ENCODE measurements at regions of chr6 and their contacts with region 1.

Region 1: DNA sequence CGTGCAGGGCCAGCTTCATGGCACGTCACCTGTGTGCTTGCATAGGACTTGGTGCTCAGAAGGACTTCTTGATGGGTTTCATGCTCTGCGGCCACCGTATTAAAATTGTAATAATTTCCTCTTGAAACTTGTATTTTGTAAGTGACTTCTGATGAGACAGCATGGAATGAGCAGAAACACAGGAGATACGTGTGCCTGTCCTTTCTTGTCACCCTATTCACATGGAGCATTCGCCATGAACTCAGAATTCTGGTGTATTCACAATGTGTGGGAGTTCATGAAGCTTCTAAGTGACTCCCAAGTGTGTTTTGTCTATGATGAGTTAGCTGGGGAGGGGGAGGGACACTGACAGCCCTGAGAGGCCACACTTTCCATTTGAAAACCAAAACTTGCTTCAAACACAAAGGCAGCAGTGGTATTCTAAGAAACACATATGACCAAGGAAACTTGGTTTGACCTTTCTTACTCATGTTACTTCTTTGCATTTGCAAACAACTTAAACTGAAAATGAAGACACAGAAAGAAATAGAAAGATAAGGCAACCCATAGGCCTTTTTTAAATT is 92.1 kb upstream of the NEDD9 start:
- DNase-seq: peak; percentile 87
- H3K4me3 Mint-ChIP-seq: peak overlapping the region; percentile 78
- H3K27ac Mint-ChIP-seq: peak overlapping the region; percentile 97
- H3K4me1 Mint-ChIP-seq: peaks cover 75% of the 10 kb centered on the region
- H3K27me3 Mint-ChIP-seq: no peaks in the 10 kb centered on the region

Region 2: DNA sequence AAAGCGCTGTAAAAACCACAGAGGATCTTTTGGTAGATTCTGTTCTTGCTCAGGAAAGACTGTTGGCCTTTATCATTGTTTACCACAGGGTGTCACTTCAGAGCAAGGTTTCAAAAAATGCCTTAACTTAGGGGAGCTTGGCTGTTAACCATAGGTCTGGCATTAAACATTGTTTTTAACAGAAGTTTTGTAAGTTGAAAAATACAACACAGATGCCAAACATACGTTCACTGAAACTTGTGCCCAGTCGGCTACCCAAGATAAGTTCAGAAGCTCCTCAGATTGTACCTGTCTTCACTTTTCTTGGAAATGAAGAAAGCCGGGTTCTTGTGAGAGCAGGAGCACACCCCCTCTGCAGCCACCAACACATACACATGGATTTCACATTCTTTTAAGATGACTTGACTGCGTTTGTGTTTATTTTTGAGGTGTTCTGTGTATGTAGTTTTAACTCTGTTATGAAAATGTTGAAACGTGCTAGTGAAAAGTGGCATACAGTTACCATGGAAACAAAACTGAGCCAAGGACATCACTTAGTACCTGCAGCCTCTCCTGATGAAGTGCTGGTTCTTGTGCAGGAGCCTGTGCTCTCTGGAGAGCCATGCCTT is 372.8 kb before region 1 on chr6:
- intact Hi-C with region 1: no loop called
- DNase-seq: no peak
- H3K4me3 Mint-ChIP-seq: no peak overlapping the region
- H3K27ac Mint-ChIP-seq: no peak overlapping the region
- H3K4me1 Mint-ChIP-seq: no peaks in the 10 kb centered on the region
- H3K27me3 Mint-ChIP-seq: peaks cover 19% of the 10 kb centered on the region

Region 3: DNA sequence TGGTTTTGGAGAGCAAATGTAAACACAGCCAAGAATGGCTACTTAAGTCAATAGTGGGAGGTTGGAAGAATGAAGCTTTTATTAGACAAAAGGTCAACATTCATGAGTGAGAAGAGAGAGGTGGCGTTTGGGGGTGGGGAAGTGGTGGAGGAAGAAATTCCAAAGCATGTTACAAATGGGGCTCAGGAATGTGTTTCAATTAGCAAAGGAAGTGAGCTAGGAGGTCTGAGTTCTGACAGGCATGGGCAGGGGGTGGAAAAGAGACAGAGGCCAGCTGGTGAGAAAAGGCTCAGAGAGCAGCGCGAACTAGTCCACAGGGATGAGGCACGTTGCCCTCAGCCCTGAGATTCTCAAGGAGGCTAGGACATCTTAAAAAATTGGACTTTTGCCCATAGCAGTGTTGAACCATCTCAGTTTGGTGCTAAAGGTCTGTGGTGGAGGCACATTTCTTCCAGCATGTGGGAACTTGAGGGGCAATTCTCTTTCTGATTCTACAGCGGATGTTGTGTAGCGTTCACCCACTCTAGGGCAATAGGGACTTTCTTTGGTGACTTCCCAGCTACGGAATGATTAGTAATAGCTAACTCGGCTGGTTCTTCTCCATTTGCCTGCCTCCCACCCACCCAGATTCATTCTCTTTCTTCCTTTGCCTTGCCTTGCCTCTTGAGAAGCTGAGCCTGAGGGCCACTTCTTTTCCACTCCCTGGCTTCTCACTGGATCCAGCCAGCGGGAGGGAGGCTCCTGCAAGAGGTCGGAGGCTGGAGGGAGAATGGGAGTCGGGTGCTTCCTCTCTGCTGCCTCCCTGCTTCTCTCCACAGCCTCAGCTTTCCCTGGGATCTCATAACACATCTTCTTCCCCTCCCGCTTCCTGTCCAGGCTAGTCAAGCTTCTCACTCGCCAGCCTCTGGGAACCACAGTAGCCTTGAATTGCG is 47.0 kb before region 1 on chr6:
- intact Hi-C with region 1: loop called (anchors 2 kb)
- DNase-seq: no peak
- H3K4me3 Mint-ChIP-seq: peak overlapping the region; percentile 31
- H3K27ac Mint-ChIP-seq: peak overlapping the region; percentile 89
- H3K4me1 Mint-ChIP-seq: peaks cover 37% of the 10 kb centered on the region
- H3K27me3 Mint-ChIP-seq: no peaks in the 10 kb centered on the region

Region 4: GRCh38 chr6:11343963-11344747 is 19.6 kb after region 1 on chr6:
- intact Hi-C with region 1: loop called (anchors 1 kb)
- DNase-seq: no peak
- H3K4me3 Mint-ChIP-seq: peak overlapping the region; percentile 2
- H3K27ac Mint-ChIP-seq: peak overlapping the region; percentile 70
- H3K4me1 Mint-ChIP-seq: peaks cover 81% of the 10 kb centered on the region
- H3K27me3 Mint-ChIP-seq: no peaks in the 10 kb centered on the region

Region 5: GRCh38 chr6:11374036-11375010 is 49.8 kb after region 1 on chr6:
- intact Hi-C with region 1: loop called (anchors 1 kb)
- DNase-seq: peak; percentile 67
- H3K4me3 Mint-ChIP-seq: peak overlapping the region; percentile 58
- H3K27ac Mint-ChIP-seq: peak overlapping the region; percentile 80
- H3K4me1 Mint-ChIP-seq: peaks cover 56% of the 10 kb centered on the region
- H3K27me3 Mint-ChIP-seq: no peaks in the 10 kb centered on the region

Region 6: DNA sequence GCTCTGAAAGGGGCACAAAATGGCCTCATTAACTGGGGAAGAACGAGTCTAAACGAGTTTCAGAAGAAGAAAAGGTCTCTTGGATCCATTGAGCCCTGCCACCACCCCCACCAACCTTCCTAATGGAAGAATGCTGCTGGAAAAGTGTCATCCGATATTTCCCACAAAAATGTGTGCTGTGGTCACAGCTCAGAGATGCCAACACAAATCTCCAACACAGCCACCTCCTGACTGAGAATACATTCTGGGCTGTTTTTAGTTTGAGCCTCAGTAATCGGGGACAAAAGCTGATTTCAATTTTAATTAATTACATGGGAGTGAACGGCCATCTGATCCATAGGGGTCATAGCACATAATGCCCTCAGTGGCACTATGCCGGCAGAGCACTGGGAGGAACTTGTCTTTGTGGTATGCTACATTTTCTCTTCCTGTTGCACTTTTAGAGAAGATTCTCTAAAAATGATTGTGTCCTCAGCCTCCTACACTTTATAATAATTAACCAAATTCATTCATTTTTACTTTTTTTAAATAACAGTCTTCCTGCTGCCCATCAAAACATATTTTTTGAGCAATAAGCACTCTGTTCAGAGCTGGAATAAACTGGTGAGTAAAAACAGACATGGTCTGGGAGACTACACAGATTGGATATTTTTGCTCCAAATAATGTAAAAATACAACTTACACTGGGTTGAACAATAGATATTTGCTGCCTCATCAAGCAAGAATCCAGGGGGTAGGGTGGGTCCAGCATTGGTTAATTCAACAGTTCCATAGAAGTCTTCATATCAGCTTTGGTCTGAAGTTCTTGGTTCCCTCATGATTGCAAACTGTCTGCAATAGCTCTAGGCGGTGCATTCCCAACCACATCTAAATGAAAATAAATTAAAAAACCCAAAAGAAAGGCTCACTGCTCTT is 69.4 kb after region 1 on chr6:
- intact Hi-C with region 1: no loop called
- DNase-seq: no peak
- H3K4me3 Mint-ChIP-seq: no peak overlapping the region
- H3K27ac Mint-ChIP-seq: no peak overlapping the region
- H3K4me1 Mint-ChIP-seq: peaks cover 9% of the 10 kb centered on the region
- H3K27me3 Mint-ChIP-seq: peaks cover 3% of the 10 kb centered on the region

Region 7: GRCh38 chr6:11460001-11460668 is 135.6 kb after region 1 on chr6:
- intact Hi-C with region 1: loop called (anchors 2 kb)
- DNase-seq: peak; percentile 66
- H3K4me3 Mint-ChIP-seq: peak overlapping the region; percentile 78
- H3K27ac Mint-ChIP-seq: peak overlapping the region; percentile 95
- H3K4me1 Mint-ChIP-seq: peaks cover 27% of the 10 kb centered on the region
- H3K27me3 Mint-ChIP-seq: no peaks in the 10 kb centered on the region

Measured in activated CD4-positive, alpha-beta T cell treated with anti-CD3 and anti-CD28 coated beads, Interleukin-2, amount 10 ng/mL, durations not matched to agents 24 days and 14 days (primary cell).